ENCODE measurements at regions of chr12 and their contacts with region 1.

Region 1: DNA sequence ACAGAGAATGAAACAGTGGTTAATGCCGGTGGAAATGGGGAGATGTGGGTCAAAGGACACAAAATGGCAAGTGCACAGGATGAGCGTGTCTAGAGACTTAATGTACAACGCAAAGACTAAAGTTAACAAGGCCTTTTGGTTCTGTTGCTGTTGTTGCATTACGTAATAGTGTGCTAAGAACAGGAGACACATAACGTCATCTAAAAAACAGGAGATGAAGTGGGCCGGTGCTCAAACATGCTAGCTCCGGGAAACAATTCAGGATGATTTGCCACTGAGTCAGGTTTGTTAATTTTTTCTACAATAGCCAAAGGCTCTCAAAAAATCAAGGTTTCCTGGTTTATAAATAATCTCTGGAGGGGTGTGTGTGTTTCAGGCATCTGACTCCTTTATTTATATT is 55.5 kb downstream of the ETV6 start:
- DNase-seq: no peak
- ATAC-seq: peak in 4 of 8 donors; percentile 25 to 60 (median 36)
- H3K4me3 ChIP-seq: no peak overlapping the region
- H3K27ac ChIP-seq: peak overlapping the region in 6 of 10 donors; percentile 31 to 54 (median 46)
- H3K4me1 ChIP-seq: peaks cover 5 to 76% (median 57%) of the 10 kb centered on the region in 9 donors
- H3K27me3 ChIP-seq: no peaks in the 10 kb centered on the region
- CTCF ChIP-seq: no peak

Region 2: DNA sequence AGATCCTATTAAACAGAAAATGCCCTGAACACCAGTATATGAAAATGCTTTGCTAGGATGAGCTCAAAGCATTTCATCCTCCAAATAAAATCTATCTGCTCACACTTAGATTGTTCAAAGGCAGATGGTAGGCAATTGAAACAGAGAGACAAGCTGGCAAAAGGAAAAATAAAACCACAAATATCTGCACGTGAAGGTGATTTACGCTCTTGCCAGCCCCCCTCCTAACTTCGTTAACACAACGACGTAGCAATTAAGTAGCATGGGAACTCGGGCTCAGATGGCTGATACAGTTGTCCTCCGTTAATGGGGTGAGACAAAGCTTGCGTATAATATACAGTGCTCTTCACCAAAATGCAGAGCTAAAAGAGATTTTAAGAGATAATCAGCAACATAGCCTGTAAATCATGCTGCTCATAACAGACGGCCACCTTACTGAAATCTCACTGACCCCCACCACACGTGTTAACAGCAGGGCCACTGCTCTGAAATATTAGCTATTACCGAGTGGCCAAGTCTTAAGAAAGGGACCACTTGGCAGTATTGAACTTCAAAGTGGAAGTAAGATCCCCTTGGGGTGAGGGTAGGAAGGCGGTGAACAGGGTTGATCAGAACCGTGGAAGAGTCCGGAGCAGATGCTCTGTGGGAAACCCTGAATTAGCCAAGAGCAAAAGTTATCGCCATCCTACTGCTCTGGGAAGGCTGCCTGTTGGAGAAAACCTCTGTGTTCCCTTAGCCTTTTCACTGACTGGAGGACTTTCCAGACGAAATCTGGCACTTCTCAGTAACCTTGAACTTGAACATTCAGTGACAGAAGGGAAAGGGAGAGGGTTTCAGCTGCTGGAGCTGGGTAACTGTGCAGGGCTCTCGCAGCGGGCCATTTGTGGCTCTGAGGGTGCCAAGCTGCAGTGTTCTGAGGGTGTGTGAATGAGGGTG is 32.5 kb before region 1 on chr12:
- intact Hi-C with region 1: loop called in 1 of 10 experiments (anchors 5 kb)
- DNase-seq: no peak
- ATAC-seq: peak; percentile 29 to 80 (median 45)
- H3K4me3 ChIP-seq: peak overlapping the region in 1 of 10 donors; percentile 21
- H3K27ac ChIP-seq: peak overlapping the region; percentile 25 to 72 (median 54)
- H3K4me1 ChIP-seq: peaks cover 31 to 95% (median 81%) of the 10 kb centered on the region in 9 donors
- H3K27me3 ChIP-seq: no peaks in the 10 kb centered on the region
- CTCF ChIP-seq: no peak

Region 3: GRCh38 chr12:11795913-11796459 is 91.0 kb after region 1 on chr12:
- intact Hi-C with region 1: no loop called
- DNase-seq: no peak
- ATAC-seq: no peak
- H3K4me3 ChIP-seq: no peak overlapping the region
- H3K27ac ChIP-seq: peak overlapping the region in 6 of 10 donors; percentile 52 to 91 (median 85)
- H3K4me1 ChIP-seq: peaks cover 6 to 78% (median 68%) of the 10 kb centered on the region in 9 donors
- H3K27me3 ChIP-seq: no peaks in the 10 kb centered on the region
- CTCF ChIP-seq: no peak